ENCODE measurements at regions of chr17 and their contacts with region 1.

Region 1: GRCh38 chr17:27466743-27467375 is 10.6 kb downstream of the KSR1 start:
- DNase-seq: peak; percentile 77
- CTCF ChIP-seq: no peak

Region 2: DNA sequence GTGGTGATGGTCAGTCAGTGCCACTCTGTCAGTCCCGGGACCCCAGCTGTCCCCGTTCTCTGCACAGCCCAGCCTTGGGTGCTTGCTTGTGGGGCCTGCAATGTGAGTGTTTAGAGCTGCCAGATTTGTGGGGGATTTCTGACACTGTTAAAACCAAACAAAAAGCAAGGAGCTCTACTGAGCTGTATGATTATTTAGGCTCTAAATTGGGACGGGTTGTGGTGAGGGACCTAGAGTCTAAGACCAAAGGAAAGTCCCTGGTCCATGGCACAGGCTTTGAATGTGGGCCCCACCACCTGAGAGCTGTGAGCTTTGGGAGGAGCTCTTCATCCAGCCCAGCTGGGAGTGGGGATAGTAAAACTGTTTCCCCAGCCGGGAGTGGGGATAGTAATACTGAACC is 52.7 kb after region 1 on chr17:
- in situ Hi-C with region 1: loop called (anchors 10 kb)
- DNase-seq: peak; percentile 66
- CTCF ChIP-seq: no peak

Region 3: DNA sequence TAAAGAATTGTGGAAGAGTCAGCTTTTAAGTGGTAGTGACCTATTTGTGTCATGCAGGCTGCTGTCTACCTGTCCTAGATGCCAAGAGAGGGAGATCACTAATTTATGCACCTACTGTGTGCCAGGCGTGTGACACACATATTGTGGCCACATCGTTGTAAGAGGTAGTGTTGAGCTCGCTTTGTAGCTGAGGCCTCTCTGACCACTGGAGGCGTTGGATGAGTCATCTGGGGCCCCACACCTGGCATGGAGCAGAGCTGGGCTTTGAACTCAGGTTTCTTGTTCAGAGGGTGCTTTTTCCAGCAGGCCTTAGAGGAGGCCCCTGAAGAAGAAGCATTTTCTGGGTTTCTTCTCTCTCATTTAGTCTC is 111.8 kb after region 1 on chr17:
- in situ Hi-C with region 1: loop called (anchors 10 kb)
- DNase-seq: peak; percentile 84
- CTCF ChIP-seq: no peak